ENCODE measurements at regions of chr17 and their contacts with region 1.

Region 1: DNA sequence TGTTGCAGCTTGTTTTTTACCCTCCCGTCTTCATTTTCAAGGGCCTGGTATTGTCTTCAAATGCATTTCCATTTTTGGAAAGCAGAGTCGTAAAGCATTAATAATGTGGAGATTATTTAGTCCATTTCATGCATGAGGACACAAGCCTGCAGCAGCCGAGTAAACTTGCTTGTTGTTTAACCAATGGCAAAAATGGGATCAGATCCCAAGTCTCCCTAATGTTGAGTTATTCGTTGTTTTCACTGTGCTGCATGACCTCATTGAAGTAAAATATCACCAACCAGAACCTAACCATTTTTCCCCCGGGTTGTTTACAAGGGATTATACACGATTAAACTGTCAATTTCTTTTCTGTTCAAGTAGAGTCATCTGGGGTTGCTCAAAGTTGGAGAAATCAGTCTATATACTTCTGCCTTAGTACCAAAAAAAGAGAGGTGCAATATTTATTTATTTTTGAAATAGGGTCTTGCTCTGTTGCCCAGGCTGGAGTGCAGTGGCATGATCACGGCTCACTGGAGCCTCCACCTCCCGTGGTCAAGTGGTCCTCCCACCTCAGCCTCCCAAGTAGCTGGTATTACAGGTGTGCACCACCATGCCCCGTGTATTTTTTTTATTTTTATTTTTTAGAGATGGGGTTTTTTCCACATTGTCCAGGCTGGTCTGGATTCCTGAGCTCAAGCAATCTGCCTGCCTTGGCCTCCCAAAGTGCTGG is 12.4 kb downstream of the AMZ2 start:
- DNase-seq: no peak
- ATAC-seq: no peak
- H3K4me3 ChIP-seq: peak overlapping the region in 1 of 2 experiments; percentile 38; a peak in 1 of 4 replicates
- H3K27ac ChIP-seq: no peak overlapping the region
- H3K4me1 ChIP-seq: peaks cover 5 to 35% of the 10 kb centered on the region in 2 experiments; a peak in 3 of 4 replicates
- H3K27me3 ChIP-seq: no peaks in the 10 kb centered on the region
- CTCF ChIP-seq: no peak
- POLR2A ChIP-seq: no peak
- RAD21 ChIP-seq: no peak

Region 2: DNA sequence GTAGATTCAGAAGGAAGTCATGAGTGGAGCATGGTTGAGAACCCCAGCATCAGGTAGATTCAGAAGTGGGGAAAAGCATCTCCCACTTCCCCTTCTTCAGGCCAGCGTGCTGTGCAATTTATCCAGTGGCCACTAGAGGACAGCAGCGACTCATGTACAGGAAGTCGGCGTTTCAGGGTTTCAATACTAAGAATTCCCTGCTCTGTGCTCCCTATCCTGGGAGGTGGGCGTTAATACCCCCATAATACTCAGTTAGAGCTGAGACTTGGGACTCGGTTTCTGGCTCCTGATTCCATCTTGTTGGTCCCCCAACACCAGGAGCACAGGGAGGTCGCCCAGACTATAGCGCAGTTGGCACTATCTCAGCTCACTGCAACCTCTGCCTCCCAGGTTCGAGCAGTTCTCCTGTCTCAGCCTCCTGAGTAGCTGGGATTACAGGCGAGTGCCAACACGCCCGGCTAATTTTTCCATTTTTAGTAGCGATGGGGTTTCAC is 87.7 kb before region 1 on chr17:
- CTCF ChIA-PET with region 1: interaction called, 3 read pairs
- POLR2A ChIA-PET with region 1: no interaction called
- RAD21 ChIA-PET with region 1: no interaction called
- intact Hi-C with region 1: loop called (anchors 5 kb)
- DNase-seq: peak; percentile 63
- ATAC-seq: peak; percentile 88
- H3K4me3 ChIP-seq: no peak overlapping the region
- H3K27ac ChIP-seq: no peak overlapping the region
- H3K4me1 ChIP-seq: peaks cover 0 to 12% of the 10 kb centered on the region in 2 experiments; a peak in 3 of 4 replicates
- H3K27me3 ChIP-seq: no peaks in the 10 kb centered on the region
- CTCF ChIP-seq: peak; percentile 97 to 100 (median 99)
- POLR2A ChIP-seq: no peak
- RAD21 ChIP-seq: peak; percentile 100

Region 3: GRCh38 chr17:68398691-68399637 is 138.8 kb after region 1 on chr17:
- CTCF ChIA-PET with region 1: interaction called, 36 read pairs
- POLR2A ChIA-PET with region 1: interaction called, 4 read pairs
- RAD21 ChIA-PET with region 1: interaction called, 8 to 10 read pairs
- intact Hi-C with region 1: loop called (anchors 1 kb)
- DNase-seq: peak; percentile 72
- ATAC-seq: peak; percentile 94
- H3K4me3 ChIP-seq: no peak overlapping the region
- H3K27ac ChIP-seq: peak overlapping the region; percentile 43
- H3K4me1 ChIP-seq: peaks cover 27 to 35% of the 10 kb centered on the region in 2 experiments
- H3K27me3 ChIP-seq: no peaks in the 10 kb centered on the region
- CTCF ChIP-seq: peak; percentile 97 to 99 (median 99)
- POLR2A ChIP-seq: no peak
- RAD21 ChIP-seq: peak; percentile 99

Region 4: GRCh38 chr17:68849673-68850610 is 589.7 kb after region 1 on chr17:
- CTCF ChIA-PET with region 1: no interaction called
- POLR2A ChIA-PET with region 1: no interaction called
- RAD21 ChIA-PET with region 1: no interaction called
- intact Hi-C with region 1: no loop called
- DNase-seq: no peak
- ATAC-seq: no peak
- H3K4me3 ChIP-seq: no peak overlapping the region
- H3K27ac ChIP-seq: no peak overlapping the region
- H3K4me1 ChIP-seq: 0 out of 4 replicates have a peak, but pooled peaks cover 0 to 5% of the 10 kb centered on the region in 2 experiments
- H3K27me3 ChIP-seq: no peaks in the 10 kb centered on the region
- CTCF ChIP-seq: no peak
- POLR2A ChIP-seq: no peak
- RAD21 ChIP-seq: no peak